Vagina (tissue), 2 donors: ENCODE measurements at regions of chr10 and their contacts with region 1.

Region 1: DNA sequence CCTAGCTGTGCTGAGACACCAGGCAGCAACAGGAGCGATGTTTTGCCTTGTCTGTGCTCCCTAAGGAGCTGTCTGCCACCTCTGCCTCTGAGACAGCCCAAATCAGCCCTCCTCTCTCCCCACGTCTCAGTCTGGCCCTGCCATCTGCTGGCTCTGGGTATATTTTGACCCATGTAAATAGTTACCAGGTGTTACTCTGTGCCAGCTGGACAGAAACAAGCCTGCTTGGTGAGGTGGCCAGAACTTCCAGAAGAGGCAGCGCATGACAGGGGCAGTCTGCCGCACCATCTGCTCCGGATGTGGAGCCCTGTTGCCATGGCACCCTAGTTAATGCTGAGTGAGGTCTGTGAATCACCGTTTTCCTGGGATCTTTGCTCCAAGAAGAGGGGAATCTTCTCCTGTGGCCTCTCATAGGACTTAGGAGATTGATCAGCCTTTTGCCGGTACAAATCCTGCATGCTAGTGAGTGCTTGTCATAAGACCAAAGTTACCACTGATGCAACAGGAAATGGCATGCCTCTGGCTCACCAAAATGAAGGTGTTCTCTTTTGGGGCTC is 31.8 kb downstream of the GSTO2 start:
- DNase-seq: no peak
- H3K4me3 ChIP-seq: no peak overlapping the region
- H3K27ac ChIP-seq: peak overlapping the region; percentile 76
- H3K4me1 ChIP-seq: peaks cover 30% of the 10 kb centered on the region
- H3K27me3 ChIP-seq: no peaks in the 10 kb centered on the region
- CTCF ChIP-seq: no peak
- POLR2A ChIP-seq: no peak

Region 2: GRCh38 chr10:104337974-104338735 is 37.3 kb after region 1 on chr10 and contains the start of gene ITPRIP:
- intact Hi-C with region 1: loop called (anchors 5 kb)
- DNase-seq: peak; percentile 96 to 97
- H3K4me3 ChIP-seq: peak within 1 kb of the TSS; percentile 80 to 87
- H3K27ac ChIP-seq: peak within 1 kb of the TSS; percentile 96
- H3K4me1 ChIP-seq: peaks cover 56% of the 10 kb centered on the region
- H3K27me3 ChIP-seq: no peaks in the 10 kb centered on the region
- CTCF ChIP-seq: no peak
- POLR2A ChIP-seq: peak in 1 of 2 donors; percentile 98
- total RNA-seq, gene ITPRIP: 85.7 TPM